ENCODE measurements at regions of chr11 and their contacts with region 1.

Region 1: DNA sequence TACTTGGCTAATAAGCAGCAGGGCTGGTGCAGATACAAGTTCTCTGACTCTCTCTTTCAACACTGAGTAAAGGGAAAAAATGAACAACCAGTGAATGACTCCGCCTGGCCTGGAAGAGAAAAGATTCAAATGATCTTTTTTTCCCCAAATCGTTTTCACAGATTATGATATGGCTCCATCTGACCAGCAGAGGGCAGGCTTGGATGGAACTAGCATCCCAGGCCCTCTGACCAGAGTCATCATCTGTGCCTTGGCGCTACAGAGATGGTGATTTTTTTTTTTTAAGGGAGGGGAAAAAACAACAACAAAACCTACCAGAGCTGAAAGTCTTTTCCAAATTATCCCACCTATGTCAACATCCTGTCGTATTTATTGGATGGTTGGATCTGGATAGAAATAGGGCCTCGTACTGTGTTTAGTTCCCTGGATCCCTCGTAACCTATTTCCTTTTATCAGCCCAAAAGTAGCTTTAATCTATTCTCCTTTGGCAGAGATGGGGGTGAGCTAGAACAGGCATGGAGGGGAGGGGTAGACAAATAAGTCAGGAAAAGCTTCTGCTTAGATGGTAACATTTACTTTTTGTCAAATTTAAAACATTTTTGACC is 69.7 kb downstream of the PRSS23 start:
- DNase-seq: no peak
- ATAC-seq: peak; percentile 87
- H3K4me3 ChIP-seq: no peak overlapping the region
- H3K27ac ChIP-seq: no peak overlapping the region
- H3K4me1 ChIP-seq: no peaks in the 10 kb centered on the region
- H3K27me3 ChIP-seq: no peaks in the 10 kb centered on the region
- CTCF ChIP-seq: peak; percentile 74

Region 2: GRCh38 chr11:86919557-86920210 is 49.6 kb after region 1 on chr11:
- intact Hi-C with region 1: loop called (anchors 10 kb)
- DNase-seq: no peak
- ATAC-seq: peak; percentile 71
- H3K4me3 ChIP-seq: no peak overlapping the region
- H3K27ac ChIP-seq: peak overlapping the region; percentile 33
- H3K4me1 ChIP-seq: peaks cover 9% of the 10 kb centered on the region
- H3K27me3 ChIP-seq: no peaks in the 10 kb centered on the region
- CTCF ChIP-seq: peak; percentile 66

Region 3: DNA sequence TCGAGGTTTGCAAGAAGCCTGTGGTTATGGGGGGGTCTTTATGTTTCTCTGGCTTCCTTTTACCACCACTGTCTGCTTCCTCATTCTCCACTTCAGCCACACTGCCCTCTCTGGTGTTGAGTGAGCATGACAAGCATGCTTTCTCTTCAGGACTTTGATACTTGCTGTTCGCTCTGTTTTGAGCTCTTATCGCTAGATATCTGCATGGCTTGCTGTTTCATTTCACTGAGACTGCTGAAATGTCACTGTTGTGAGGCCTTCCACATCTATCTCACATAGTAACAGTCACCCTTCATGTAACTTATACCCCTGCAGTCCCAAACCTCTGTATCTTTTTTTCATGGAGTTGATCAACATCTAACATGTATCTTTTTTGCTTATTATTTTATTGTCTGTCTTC is 227.5 kb after region 1 on chr11:
- intact Hi-C with region 1: no loop called
- DNase-seq: no peak
- ATAC-seq: peak; percentile 86
- H3K4me3 ChIP-seq: no peak overlapping the region
- H3K27ac ChIP-seq: no peak overlapping the region
- H3K4me1 ChIP-seq: no peaks in the 10 kb centered on the region
- H3K27me3 ChIP-seq: no peaks in the 10 kb centered on the region
- CTCF ChIP-seq: peak; percentile 64

Measured in upper lobe of right lung (tissue), 1 donor.